ENCODE measurements at regions of chr18 and their contacts with region 1.

Region 1: DNA sequence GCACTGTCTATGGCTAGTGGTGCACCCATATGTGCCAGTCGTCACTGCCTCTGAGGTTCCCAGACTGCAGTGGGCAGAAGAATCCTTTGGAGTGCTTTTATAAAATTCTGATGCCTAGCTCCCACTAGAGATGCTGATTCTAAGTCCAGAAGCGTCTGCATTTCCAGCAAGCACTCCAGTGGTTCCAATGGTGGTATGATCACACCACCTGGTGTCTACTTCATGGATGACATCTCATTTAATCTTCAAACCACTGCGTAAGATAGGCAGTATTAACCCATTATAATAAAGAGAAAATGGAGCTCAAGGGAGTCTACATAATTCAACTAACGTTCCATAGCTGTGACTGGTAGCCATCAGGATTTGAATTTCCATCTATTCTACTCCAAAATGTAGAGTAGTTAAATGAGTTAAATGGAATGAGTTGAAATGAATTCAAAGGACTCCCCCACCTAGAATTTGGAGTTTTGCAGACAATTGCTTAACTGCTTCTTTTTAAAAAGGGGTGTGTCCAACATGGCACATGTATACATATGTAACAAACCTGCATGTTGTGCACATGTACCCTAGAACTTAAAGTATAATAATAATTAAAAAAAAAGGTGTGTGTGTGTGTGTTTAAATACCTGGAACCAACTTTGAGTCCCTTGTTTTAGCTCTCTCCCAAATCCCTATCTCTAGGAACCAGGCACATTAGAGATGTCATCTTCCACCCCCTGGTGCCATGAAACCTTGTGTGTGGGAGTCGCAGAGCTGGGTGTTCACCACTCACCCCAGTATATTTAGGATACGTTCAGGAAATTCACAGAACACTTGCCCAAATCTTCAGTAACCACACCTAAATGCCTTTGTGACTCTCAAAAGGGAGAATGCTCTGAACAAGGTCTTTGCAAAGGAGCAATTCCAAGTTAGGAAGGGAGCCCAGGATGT is 14.1 kb downstream of the LAMA3 start:
- DNase-seq: peak; percentile 43 to 79
- ATAC-seq: peak; percentile 87 to 95
- H3K4me3 ChIP-seq: no peak overlapping the region
- H3K27ac ChIP-seq: peak overlapping the region; percentile 36 to 41; a peak in 5 of 6 replicates
- H3K4me1 ChIP-seq: peaks cover 33% of the 10 kb centered on the region
- CTCF ChIP-seq: peak; percentile 73
- EP300 ChIP-seq: no peak
- POLR2A ChIP-seq: no peak
- RAD21 ChIP-seq: peak; percentile 90 to 94

Region 2: GRCh38 chr18:23580677-23581367 is 122.5 kb before region 1 on chr18:
- CTCF ChIA-PET with region 1: interaction called, 13 read pairs
- POLR2A ChIA-PET with region 1: no interaction called
- DNase-seq: no peak
- ATAC-seq: no peak; a peak in 1 of 6 replicates
- H3K4me3 ChIP-seq: no peak overlapping the region
- H3K27ac ChIP-seq: no peak overlapping the region
- H3K4me1 ChIP-seq: peaks cover 37% of the 10 kb centered on the region
- CTCF ChIP-seq: no peak
- EP300 ChIP-seq: no peak
- POLR2A ChIP-seq: no peak
- RAD21 ChIP-seq: no peak

Region 3: GRCh38 chr18:23612435-23613085 is 90.8 kb before region 1 on chr18:
- CTCF ChIA-PET with region 1: interaction called, 89 read pairs
- POLR2A ChIA-PET with region 1: no interaction called
- DNase-seq: no peak
- ATAC-seq: no peak
- H3K4me3 ChIP-seq: no peak overlapping the region
- H3K27ac ChIP-seq: peak overlapping the region in 1 of 2 experiments; percentile 35; a peak in 1 of 6 replicates
- H3K4me1 ChIP-seq: peaks cover 14% of the 10 kb centered on the region
- CTCF ChIP-seq: no peak
- EP300 ChIP-seq: no peak
- POLR2A ChIP-seq: no peak
- RAD21 ChIP-seq: no peak

Region 4: GRCh38 chr18:23635283-23636070 is 67.8 kb before region 1 on chr18:
- CTCF ChIA-PET with region 1: interaction called, 20 read pairs
- POLR2A ChIA-PET with region 1: no interaction called
- DNase-seq: no peak
- ATAC-seq: no peak
- H3K4me3 ChIP-seq: no peak overlapping the region
- H3K27ac ChIP-seq: peak overlapping the region; percentile 41 to 77; a peak in 5 of 6 replicates
- H3K4me1 ChIP-seq: peaks cover 38% of the 10 kb centered on the region
- CTCF ChIP-seq: no peak
- EP300 ChIP-seq: no peak
- POLR2A ChIP-seq: no peak
- RAD21 ChIP-seq: no peak

Region 5: DNA sequence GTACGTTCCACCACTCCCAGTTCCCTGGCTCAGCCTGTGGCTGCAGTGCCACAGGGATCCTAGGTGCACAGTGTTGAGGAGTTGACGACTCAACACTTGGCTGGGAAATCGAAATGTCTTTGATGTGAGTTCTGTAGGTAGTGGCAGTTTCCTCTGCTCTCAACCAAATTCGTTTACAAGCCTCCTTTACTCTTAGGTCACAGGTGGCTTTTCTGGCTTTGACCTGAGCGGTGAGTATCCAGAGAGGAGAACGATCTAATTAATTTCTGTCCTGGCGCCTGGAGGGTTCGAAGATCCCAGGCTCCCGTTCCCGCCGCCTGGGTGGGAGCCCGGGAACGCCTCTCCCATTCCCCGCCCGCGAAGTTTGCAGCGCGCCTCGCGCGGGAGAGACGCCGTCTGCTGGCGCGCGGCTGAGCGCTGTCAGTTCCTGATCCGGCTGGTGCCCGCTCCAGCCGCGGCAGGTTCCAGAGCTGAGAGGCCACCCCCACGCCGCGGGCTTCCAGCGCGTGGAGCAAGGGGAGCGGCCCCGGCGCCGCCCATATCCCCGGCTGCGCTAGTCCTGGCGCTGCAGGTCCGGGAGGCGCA is 14.2 kb before region 1 on chr18 and contains the start of gene LAMA3:
- CTCF ChIA-PET with region 1: interaction called, 47 read pairs
- POLR2A ChIA-PET with region 1: interaction called, 3 read pairs
- DNase-seq: peak; percentile 46 to 65
- ATAC-seq: peak; percentile 79 to 89
- H3K4me3 ChIP-seq: peak within 1 kb of the TSS; percentile 67
- H3K27ac ChIP-seq: peak within 1 kb of the TSS; percentile 84 to 97
- H3K4me1 ChIP-seq: peaks cover 31% of the 10 kb centered on the region
- CTCF ChIP-seq: peak; percentile 31; the same call in 2 of the 3 replicates
- EP300 ChIP-seq: no peak
- POLR2A ChIP-seq: peak; percentile 35
- RAD21 ChIP-seq: peak in 1 of 2 experiments; percentile 47; a peak in 3 of 5 replicates
- polyA plus RNA-seq, gene LAMA3: 31.0 and 40.1 TPM in 2 replicates

Region 6: DNA sequence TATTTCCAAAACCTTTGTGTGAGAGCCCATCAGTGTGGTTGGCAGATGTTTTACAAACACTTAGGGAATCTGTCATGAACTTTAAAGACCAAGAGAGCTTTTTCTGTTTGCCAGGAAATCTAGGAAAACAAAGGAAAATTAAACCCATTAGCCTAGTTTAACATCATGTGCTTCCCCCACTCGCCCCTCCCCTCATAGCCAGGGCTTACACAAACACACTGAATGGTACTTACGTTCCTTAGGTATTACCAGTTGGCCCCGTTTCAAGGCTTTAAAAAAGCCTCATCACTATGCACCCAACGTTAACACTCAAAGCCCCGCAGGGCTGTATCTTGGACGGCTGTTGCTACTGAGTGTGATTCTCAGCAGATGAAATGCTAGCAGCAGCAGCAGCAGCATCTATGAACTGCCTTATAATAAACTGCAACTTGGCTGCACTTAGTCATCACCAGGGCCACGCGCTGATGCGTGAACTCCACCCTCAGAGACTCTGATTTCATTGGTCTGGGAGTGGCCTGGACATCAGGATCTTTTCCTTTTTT is 291.1 kb after region 1 on chr18:
- CTCF ChIA-PET with region 1: no interaction called
- POLR2A ChIA-PET with region 1: no interaction called
- DNase-seq: peak in 1 of 2 experiments; percentile 44
- ATAC-seq: peak; percentile 83 to 89
- H3K4me3 ChIP-seq: no peak overlapping the region
- H3K27ac ChIP-seq: peak overlapping the region; percentile 23 to 46; a peak in 2 of 6 replicates
- H3K4me1 ChIP-seq: peaks cover 18% of the 10 kb centered on the region; the same call in 2 of the 3 replicates
- CTCF ChIP-seq: no peak
- EP300 ChIP-seq: no peak
- POLR2A ChIP-seq: no peak
- RAD21 ChIP-seq: no peak

Measured in A549 (cell line).